ENCODE measurements at regions of chr17 and their contacts with region 1.

Region 1: DNA sequence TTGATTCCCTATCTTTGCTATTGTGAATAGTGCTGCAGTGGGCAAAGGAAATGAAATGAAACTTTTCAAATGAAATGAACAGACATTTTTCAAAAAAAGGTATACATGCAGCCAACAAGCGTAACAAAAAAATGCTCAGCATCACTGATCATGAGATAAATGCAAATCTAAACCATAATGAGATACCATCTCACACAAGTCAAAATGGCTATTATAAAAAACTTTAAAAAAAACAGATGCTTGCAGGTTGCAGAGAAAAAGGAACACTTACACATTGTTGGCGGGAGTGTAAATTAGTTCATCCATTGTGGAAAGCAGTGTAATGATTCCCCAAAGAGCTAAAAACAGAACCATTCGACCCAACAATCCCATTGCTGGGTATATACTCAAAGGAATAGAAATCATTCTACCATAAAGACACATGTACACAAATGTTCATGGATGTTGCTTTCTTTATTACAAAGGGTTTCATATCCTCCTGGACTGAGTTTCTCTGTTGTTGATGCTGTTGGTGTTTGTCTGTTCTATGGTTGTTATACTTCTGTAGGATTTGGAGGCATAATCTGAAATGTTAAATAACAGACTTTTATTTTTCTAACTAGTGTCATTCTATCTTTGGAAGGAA is 99.3 kb upstream of the SOX9 start:
- DNase-seq: peak; percentile 65
- H3K4me3 ChIP-seq: peak overlapping the region; percentile 20
- H3K27ac ChIP-seq: peak overlapping the region; percentile 83
- H3K4me1 ChIP-seq: peaks cover 86% of the 10 kb centered on the region
- CTCF ChIP-seq: no peak

Region 2: GRCh38 chr17:71987634-71988033 is 33.9 kb before region 1 on chr17:
- CTCF ChIA-PET with region 1: no interaction called
- POLR2A ChIA-PET with region 1: interaction called, 17 read pairs
- intact Hi-C with region 1: no loop called
- DNase-seq: peak; percentile 55
- H3K4me3 ChIP-seq: no peak overlapping the region
- H3K27ac ChIP-seq: no peak overlapping the region
- H3K4me1 ChIP-seq: peaks cover 27% of the 10 kb centered on the region
- CTCF ChIP-seq: no peak